SK-N-SH (cell line): ENCODE measurements at regions of chr1 and their contacts with region 1.

Region 1: GRCh38 chr1:150168960-150169601 is 19.4 kb downstream of the PLEKHO1 start:
- DNase-seq: peak; percentile 84
- H3K4me3 ChIP-seq: no peak overlapping the region; a peak in 1 of 4 replicates
- H3K27ac ChIP-seq: no peak overlapping the region
- H3K4me1 ChIP-seq: peaks cover 0 to 3% of the 10 kb centered on the region in 2 experiments; a peak in 2 of 4 replicates
- H3K27me3 ChIP-seq: no peaks in the 10 kb centered on the region
- CTCF ChIP-seq: peak; percentile 93
- EP300 ChIP-seq: no peak
- RAD21 ChIP-seq: peak; percentile 90

Region 2: GRCh38 chr1:149937060-149937705 is 231.9 kb before region 1 on chr1:
- CTCF ChIA-PET with region 1: interaction called, 10 read pairs
- POLR2A ChIA-PET with region 1: no interaction called
- DNase-seq: no peak
- H3K4me3 ChIP-seq: peak overlapping the region; percentile 51; a peak in 2 of 4 replicates
- H3K27ac ChIP-seq: peak overlapping the region; percentile 73 to 83
- H3K4me1 ChIP-seq: peaks cover 22 to 29% of the 10 kb centered on the region in 2 experiments
- H3K27me3 ChIP-seq: no peaks in the 10 kb centered on the region
- CTCF ChIP-seq: peak; percentile 19; the same call in 1 of the 2 replicates
- EP300 ChIP-seq: no peak
- RAD21 ChIP-seq: no peak

Region 3: DNA sequence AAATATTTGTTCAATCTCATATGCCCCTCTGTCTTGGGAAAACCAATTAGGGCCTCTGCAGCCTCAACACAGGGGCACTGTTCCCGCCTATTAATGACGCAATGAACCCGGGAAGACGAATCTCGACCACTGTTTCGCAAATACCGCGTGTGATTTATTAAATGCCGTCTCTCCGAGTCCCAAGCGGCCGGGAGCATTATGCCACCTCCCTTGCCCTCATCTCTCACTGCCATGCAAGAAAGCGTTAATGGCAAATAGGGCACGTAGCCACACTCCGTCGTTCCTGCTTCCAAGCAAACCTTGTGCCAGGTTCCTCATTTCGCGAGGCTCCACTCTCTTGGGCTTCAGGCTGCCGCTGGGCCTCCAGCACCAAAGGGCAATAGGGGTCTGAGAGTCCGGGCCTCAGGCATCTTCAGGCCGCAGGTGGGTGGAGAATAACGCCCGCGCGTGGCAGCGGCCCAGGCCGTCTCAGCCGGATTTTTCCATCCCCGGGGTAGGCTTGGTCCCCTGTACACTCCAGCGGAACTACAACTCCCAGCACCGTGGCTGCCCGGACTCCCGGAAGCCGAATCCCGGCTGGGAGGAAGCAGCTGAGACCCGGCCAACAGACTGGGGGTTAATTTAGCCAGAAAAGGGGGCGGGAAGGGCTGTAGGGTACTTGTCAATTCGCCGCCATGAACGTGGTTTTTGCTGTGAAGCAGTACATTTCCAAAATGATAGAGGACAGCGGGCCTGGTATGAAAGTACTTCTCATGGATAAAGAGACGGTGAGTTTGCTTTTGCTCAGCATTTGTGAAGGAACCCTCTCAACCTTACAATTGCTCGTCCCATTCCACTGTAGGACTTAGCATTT is 101.7 kb before region 1 on chr1 and contains the start of gene VPS45:
- CTCF ChIA-PET with region 1: interaction called, 87 read pairs
- POLR2A ChIA-PET with region 1: no interaction called
- DNase-seq: peak; percentile 91
- H3K4me3 ChIP-seq: peak within 1 kb of the TSS; percentile 81 to 86
- H3K27ac ChIP-seq: peak within 1 kb of the TSS; percentile 90 to 98
- H3K4me1 ChIP-seq: peaks cover 4 to 21% of the 10 kb centered on the region in 2 experiments; a peak in 3 of 4 replicates
- H3K27me3 ChIP-seq: no peaks in the 10 kb centered on the region
- CTCF ChIP-seq: no peak
- EP300 ChIP-seq: peak in 1 of 2 experiments; percentile 13; a peak in 1 of 4 replicates
- RAD21 ChIP-seq: no peak
- polyA plus RNA-seq, gene VPS45: 31.5 and 48.7 TPM in 2 replicates

Region 4: DNA sequence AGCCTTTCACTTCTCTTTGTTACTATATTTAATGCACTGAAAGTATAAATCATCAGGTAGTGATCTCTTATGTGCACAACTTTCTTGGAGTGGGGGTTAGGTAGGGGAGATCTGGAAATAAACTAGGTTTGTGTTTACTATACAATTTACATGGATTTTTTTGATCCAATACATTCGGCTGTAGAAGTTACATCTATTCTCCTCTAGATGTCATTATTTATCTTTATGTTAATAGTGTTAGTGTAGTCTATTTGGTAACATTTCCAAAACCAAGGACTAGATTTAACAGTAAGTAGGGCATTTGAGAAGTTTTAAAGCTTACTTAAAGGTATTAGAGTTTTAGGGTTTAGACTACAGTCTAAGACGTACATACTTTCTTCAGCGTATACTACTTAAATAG is 96.1 kb before region 1 on chr1:
- CTCF ChIA-PET with region 1: interaction called, 87 read pairs
- POLR2A ChIA-PET with region 1: no interaction called
- DNase-seq: peak; percentile 26
- H3K4me3 ChIP-seq: no peak overlapping the region
- H3K27ac ChIP-seq: no peak overlapping the region; a peak in 1 of 4 replicates
- H3K4me1 ChIP-seq: peaks cover 0 to 8% of the 10 kb centered on the region in 2 experiments; a peak in 2 of 4 replicates
- H3K27me3 ChIP-seq: no peaks in the 10 kb centered on the region
- CTCF ChIP-seq: peak; percentile 71
- EP300 ChIP-seq: no peak
- RAD21 ChIP-seq: peak; percentile 54

Region 5: GRCh38 chr1:150149271-150150132 is 19.6 kb before region 1 on chr1 and contains the start of gene PLEKHO1:
- CTCF ChIA-PET with region 1: interaction called, 59 read pairs
- POLR2A ChIA-PET with region 1: no interaction called
- DNase-seq: peak; percentile 92
- H3K4me3 ChIP-seq: peak within 1 kb of the TSS; percentile 86 to 89
- H3K27ac ChIP-seq: peak within 1 kb of the TSS; percentile 81 to 87
- H3K4me1 ChIP-seq: peaks cover 18 to 28% of the 10 kb centered on the region in 2 experiments
- H3K27me3 ChIP-seq: no peaks in the 10 kb centered on the region
- CTCF ChIP-seq: no peak
- EP300 ChIP-seq: 0 out of 4 replicates have a peak, but pooled peaks of 1 of the 2 experiments have one; percentile 7
- RAD21 ChIP-seq: no peak
- polyA plus RNA-seq, gene PLEKHO1: 27.8 and 33.5 TPM in 2 replicates

Region 6: DNA sequence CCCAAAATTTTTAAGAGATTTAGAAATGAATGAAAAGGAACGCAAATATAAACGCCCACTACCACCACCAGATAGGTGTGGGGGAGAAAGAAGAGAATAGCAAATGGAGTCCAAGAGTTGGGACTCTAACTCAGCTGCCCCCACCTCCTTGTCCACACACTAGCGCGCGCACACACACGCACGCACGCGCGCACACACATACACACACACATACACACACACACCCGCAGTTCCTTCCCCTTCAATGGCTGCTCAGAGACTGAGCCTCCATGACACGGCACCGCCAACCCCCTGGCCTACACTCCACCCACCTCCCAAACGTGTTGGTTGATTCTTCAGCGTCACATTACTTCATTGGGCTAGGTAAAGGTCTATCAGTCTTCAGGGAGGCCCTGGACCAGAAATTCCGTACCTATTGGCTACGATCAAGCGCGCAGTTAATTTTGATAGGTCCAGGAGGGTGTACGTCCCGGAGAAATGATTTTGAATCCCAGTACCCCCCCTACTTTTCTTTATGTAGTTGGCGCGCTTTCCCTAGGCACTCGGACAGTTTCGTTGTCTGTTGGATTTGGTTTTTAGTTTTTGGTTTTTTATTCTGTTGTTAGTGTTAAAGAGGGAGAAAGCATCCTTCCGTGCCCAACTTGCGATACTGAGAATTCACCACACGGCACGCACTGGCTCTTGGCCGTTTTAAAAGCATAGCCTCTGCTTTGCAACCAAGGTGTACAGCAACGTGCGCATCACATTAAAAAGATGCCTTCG is 67.0 kb after region 1 on chr1 and contains the start of gene ANP32E:
- CTCF ChIA-PET with region 1: no interaction called
- POLR2A ChIA-PET with region 1: no interaction called
- DNase-seq: peak; percentile 95
- H3K4me3 ChIP-seq: peak within 1 kb of the TSS; percentile 69 to 78
- H3K27ac ChIP-seq: peak within 1 kb of the TSS; percentile 81 to 93
- H3K4me1 ChIP-seq: peaks cover 0 to 5% of the 10 kb centered on the region in 2 experiments; a peak in 2 of 4 replicates
- H3K27me3 ChIP-seq: no peaks in the 10 kb centered on the region
- CTCF ChIP-seq: peak; percentile 25; the same call in 1 of the 2 replicates
- EP300 ChIP-seq: no peak
- RAD21 ChIP-seq: no peak
- polyA plus RNA-seq, gene ANP32E: 8.2 and 8.7 TPM in 2 replicates